H1 (cell line): ENCODE measurements at regions of chr11 and their contacts with region 1.

Region 1: DNA sequence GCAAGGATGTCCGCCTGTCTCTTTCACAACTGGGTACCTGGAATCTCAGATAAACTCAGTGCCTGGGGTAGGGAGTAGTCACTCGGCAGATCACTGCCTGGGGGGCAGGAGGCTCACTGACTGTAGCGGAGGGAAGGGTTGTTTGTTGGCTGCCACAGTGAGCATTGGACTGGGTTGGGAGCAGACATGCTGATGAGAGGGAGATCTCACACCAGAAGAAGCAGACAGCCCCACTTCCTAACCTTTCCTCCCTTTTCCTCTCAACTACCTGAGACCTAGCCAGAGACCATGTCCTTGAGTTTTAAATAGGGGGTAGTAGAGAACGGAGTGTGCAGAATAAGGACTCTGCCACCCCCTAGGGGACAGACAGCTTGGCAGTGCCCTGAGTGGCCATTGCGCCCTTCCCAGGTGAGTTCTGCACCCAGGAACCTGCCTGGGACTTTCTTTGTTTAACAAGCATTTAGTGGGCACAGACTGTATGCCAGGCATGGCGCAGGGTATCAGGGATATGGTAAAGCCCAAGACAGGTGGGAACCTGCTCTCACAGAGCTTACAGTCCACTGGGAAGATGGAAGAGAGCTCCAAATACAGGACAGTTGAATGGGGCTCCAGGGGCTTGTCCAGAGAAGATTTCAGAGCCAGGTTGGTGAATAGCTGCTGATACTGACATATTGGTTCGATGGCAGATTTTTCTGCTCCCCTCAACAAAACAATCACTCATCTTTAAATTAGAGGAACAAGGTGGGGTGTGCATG is 115.7 kb upstream of the NNMT start:
- DNase-seq: no peak
- H3K4me3 ChIP-seq: no peak overlapping the region
- H3K27ac ChIP-seq: no peak overlapping the region
- H3K4me1 ChIP-seq: peaks cover 0 to 6% (median 0%) of the 10 kb centered on the region in 4 experiments; a peak in 2 of 7 replicates
- H3K27me3 ChIP-seq: no peaks in the 10 kb centered on the region
- CTCF ChIP-seq: peak; percentile 75 to 87 (median 79)
- EP300 ChIP-seq: no peak
- POLR2A ChIP-seq: no peak
- RAD21 ChIP-seq: peak; percentile 82 to 87

Region 2: GRCh38 chr11:114036156-114036811 is 144.2 kb before region 1 on chr11:
- CTCF ChIA-PET with region 1: interaction called, 106 read pairs
- POLR2A ChIA-PET with region 1: interaction called, 4 read pairs
- DNase-seq: peak; percentile 86 to 90
- H3K4me3 ChIP-seq: peak overlapping the region in 1 of 4 experiments; percentile 43; a peak in 2 of 8 replicates
- H3K27ac ChIP-seq: no peak overlapping the region
- H3K4me1 ChIP-seq: no peaks in the 10 kb centered on the region
- H3K27me3 ChIP-seq: peaks cover 0 to 3% (median 0%) of the 10 kb centered on the region in 4 experiments; a peak in 2 of 7 replicates
- CTCF ChIP-seq: peak; percentile 70 to 98 (median 96)
- EP300 ChIP-seq: 0 out of 3 replicates have a peak, but pooled peaks of 1 of the 2 experiments have one; percentile 56
- POLR2A ChIP-seq: no peak
- RAD21 ChIP-seq: peak; percentile 81 to 87

Region 3: DNA sequence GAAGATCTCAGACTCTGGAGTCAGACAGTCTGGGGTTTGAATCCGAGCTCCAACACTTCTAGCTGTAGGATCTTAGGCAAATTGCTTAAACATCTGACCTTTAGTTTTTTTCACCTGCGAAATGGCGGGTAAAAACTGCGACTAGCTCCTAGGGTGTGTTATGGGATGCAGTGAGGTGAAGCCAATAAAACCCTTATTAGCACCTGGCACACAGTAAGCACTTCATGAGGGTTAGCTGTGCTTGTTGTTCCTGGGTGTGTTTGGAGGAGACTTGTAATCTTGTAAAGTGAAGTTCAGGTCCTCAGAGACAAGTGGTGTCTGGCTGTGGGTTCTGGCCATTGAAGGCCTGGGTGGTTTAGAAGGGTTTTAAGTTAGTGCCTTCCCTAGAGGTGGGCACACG is 52.1 kb before region 1 on chr11:
- CTCF ChIA-PET with region 1: interaction called, 12 read pairs
- POLR2A ChIA-PET with region 1: interaction called, 3 read pairs
- DNase-seq: no peak
- H3K4me3 ChIP-seq: no peak overlapping the region
- H3K27ac ChIP-seq: no peak overlapping the region
- H3K4me1 ChIP-seq: no peaks in the 10 kb centered on the region
- H3K27me3 ChIP-seq: no peaks in the 10 kb centered on the region
- CTCF ChIP-seq: no peak
- EP300 ChIP-seq: no peak
- POLR2A ChIP-seq: no peak
- RAD21 ChIP-seq: no peak

Region 4: DNA sequence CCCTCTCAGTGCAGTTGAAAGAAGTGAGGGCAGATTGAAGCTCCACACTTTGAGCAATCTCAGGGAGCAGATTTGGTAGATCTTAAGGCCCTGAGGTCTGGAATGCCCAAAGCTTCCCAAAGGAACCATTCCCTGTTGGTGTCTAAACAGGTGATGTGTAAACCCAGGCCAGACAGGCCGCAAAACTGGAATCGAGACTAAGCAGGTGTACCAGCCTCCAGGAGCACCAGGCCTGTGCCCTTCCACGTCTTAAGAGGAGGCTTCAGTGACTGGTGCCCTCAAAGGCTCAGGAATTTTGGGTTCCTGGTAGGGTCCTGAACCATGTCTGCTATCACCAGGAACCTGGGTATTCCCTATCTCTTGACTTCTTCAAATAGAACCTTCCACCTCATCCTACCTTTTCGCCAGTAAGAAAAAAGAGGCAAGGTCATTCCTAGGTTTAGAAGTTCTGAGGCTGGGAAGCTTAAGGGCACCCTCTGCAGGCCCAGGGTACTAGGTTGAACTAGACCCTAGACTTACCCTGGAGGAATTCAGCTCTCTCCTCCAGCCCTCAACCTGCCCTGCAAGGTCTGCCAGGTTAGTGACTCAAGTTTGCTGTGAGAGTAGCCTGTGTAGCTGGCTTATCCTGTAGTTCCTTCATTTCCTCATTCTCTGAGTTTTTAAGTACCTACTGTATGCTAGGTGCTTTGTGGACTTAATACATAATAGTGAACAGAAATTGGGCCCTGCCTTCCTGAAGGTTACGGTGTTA is 15.7 kb after region 1 on chr11:
- CTCF ChIA-PET with region 1: interaction called, 52 read pairs
- POLR2A ChIA-PET with region 1: no interaction called
- DNase-seq: no peak
- H3K4me3 ChIP-seq: no peak overlapping the region
- H3K27ac ChIP-seq: no peak overlapping the region
- H3K4me1 ChIP-seq: peaks cover 0 to 5% (median 0%) of the 10 kb centered on the region in 4 experiments; a peak in 2 of 7 replicates
- H3K27me3 ChIP-seq: no peaks in the 10 kb centered on the region
- CTCF ChIP-seq: no peak
- EP300 ChIP-seq: no peak
- POLR2A ChIP-seq: no peak
- RAD21 ChIP-seq: peak in 1 of 2 experiments; percentile 28; a peak in 1 of 4 replicates

Region 5: DNA sequence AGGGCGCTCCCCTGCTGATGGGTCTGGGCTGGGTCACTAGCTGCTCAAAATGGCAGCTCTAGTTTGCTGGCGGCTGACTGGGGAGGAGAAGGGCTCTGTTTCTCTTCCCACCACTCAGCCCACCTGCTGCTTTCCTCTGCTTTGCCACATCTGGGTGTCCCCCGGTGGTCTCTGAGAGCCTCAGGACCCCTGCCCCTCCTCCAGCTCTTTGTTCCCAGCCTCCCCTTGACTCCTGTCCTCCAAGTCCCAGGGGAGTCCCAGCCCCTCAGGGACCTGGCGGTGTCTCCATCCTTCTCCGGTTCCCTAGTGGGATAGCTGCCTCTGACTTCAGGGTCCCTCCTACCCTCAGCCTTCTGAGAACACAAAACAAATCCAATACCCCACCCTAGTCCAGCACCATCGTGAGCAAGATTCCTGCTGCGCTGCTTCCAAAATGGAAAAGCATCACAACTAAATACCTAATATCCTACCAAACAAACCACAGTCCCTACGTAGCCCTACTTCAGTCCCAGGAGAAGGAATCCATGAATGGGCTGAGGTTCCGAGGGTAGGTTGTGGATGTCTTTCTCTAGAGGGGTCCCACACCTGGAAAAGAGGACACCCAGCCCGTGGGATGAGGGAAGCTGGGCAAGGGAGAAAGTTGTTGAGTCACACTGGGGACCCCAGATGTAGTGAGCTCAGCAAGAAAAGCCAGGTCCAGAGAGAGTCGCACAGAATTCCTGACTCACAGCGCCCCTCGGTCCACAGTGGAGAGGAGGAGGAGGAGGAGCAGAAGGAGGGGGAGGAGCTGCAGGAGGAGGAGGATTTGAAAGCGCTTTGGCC is 70.7 kb after region 1 on chr11:
- CTCF ChIA-PET with region 1: interaction called, 10 read pairs
- POLR2A ChIA-PET with region 1: no interaction called
- DNase-seq: no peak
- H3K4me3 ChIP-seq: no peak overlapping the region
- H3K27ac ChIP-seq: no peak overlapping the region
- H3K4me1 ChIP-seq: peaks cover 0 to 5% (median 0%) of the 10 kb centered on the region in 4 experiments; a peak in 2 of 7 replicates
- H3K27me3 ChIP-seq: no peaks in the 10 kb centered on the region
- CTCF ChIP-seq: no peak
- EP300 ChIP-seq: no peak
- POLR2A ChIP-seq: no peak
- RAD21 ChIP-seq: no peak

Region 6: DNA sequence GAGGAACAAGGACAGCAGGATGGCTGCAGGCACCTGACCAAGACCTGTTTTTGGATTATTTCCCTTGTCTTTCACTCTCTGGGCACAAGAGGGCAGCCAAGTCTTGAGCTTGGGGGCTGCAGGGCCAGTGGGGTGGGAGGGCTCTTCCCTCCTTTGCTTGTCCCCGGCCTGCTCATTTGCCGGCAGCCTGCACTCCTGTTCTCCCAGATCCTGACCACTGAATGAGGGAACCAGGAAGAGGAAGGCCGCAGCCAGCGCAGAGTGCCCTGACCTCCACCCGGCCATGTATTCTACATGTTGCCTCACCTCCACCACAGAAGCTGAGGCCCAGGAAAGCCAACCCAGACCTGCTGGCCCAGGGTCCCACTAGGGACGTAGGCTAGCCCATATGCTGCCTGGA is 100.2 kb after region 1 on chr11:
- CTCF ChIA-PET with region 1: no interaction called
- POLR2A ChIA-PET with region 1: no interaction called
- DNase-seq: peak; percentile 85 to 87
- H3K4me3 ChIP-seq: no peak overlapping the region
- H3K27ac ChIP-seq: no peak overlapping the region
- H3K4me1 ChIP-seq: peaks cover 0 to 4% (median 0%) of the 10 kb centered on the region in 4 experiments; a peak in 2 of 7 replicates
- H3K27me3 ChIP-seq: no peaks in the 10 kb centered on the region
- CTCF ChIP-seq: peak; percentile 67 to 87 (median 87)
- EP300 ChIP-seq: no peak
- POLR2A ChIP-seq: no peak
- RAD21 ChIP-seq: peak; percentile 95 to 98

Region 7: DNA sequence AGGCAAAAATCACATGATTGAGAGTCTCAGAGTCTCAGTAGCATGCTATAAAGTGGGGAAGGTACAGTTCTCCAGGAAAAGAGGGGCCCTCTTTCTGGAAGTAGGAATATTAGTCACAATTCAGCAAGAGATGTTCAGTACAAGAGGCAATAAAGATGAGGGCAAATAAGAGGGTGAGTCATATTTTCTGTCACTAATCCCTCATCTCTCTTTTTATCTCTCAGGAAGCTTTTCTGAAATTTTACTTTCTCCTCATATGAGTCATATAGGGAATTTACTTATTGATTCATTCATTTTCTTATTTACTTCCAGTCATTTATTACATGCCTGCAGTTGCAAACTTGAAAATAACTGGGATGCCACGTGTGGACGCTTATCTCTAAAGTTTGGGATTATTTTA is 382.6 kb after region 1 on chr11:
- CTCF ChIA-PET with region 1: no interaction called
- POLR2A ChIA-PET with region 1: no interaction called
- DNase-seq: no peak
- H3K4me3 ChIP-seq: no peak overlapping the region
- H3K27ac ChIP-seq: no peak overlapping the region
- H3K4me1 ChIP-seq: peaks cover 0 to 4% (median 3%) of the 10 kb centered on the region in 4 experiments; a peak in 3 of 7 replicates
- H3K27me3 ChIP-seq: no peaks in the 10 kb centered on the region
- CTCF ChIP-seq: no peak
- EP300 ChIP-seq: no peak
- POLR2A ChIP-seq: no peak
- RAD21 ChIP-seq: no peak